Activated CD8-positive, alpha-beta T cell treated with anti-CD3 and anti-CD28 coated beads, Interleukin-2, amount 10 ng/mL, durations not matched to agents 7 days and 5 days (primary cell): ENCODE measurements at regions of chr4 and their contacts with region 1.

Region 1: DNA sequence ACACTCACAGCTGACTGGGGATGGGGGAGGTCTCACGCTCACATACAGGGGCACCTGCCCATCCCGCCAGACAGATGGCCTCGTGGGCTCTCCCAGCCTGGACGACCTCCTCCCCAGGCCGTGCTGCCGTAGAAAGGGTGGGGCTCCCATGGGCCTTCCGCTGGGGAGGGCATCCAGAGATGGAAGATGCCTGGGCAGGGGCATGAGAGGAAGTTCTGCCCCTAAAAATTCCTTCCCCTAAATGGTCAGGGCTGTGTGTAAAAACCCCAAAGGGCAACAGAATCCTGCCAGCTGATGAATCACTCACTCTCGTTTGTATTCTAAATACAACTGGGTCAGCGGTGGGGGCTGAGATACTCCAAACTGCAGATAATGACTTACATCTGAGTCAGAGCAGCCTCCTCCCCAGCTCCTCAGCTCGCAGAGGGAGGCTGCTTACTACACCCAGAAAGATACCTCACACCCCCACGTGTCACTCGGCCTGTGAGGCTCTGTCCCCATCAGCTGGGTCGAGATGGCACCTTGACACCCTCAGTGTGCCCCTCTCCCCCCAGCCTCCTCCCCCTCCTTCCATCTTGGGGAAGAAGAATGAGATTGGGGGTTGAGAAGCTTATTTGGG is 10.1 kb downstream of the WDR1 start:
- DNase-seq: peak; percentile 66
- ATAC-seq: peak; percentile 60
- H3K4me3 Mint-ChIP-seq: peak overlapping the region; percentile 18
- H3K27ac Mint-ChIP-seq: peak overlapping the region; percentile 83
- H3K4me1 Mint-ChIP-seq: peaks cover 96% of the 10 kb centered on the region
- H3K27me3 Mint-ChIP-seq: no peaks in the 10 kb centered on the region

Region 2: DNA sequence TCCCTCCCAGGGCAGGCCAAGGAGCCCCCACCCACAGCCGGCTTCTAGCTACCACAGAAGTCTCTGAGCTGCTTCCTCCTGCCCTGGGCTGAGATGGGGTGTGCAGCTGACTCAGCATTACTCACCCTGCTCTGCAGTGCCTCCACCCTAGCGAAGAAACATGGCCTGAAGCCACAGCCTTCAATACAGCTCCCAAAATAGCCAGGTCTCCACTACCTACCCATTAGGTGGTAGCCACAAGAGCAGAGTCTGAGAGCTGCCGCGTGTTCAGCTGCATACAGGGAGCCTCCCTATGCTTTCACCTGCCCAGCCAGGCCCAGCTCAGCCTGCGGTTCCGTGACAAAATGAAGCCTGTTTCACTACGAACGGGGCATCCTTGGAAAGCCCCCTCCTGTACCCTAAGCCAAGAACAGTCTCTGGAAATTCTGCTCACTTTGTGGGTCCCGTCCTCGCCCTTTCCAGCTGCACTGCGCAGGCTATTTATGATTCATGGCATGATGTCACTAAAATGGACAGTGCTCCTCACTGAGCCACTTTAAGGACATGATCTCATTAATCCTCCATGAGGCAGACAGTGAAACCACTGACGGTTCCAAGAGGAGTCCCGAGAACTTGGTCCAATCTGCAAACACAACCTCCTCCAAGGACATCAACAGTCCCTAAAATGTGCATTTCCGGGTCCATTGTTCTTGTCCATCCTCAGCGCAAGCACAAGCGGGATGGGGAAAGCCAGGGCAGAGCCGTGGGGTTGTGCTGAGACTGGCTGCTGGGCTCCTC is 10.1 kb before region 1 on chr4:
- CTCF ChIA-PET with region 1: interaction called, 10 read pairs
- POLR2A ChIA-PET with region 1: interaction called, 7 read pairs
- DNase-seq: peak; percentile 89
- ATAC-seq: peak; percentile 74
- H3K4me3 Mint-ChIP-seq: peak overlapping the region; percentile 58
- H3K27ac Mint-ChIP-seq: peak overlapping the region; percentile 91
- H3K4me1 Mint-ChIP-seq: peaks cover 97% of the 10 kb centered on the region
- H3K27me3 Mint-ChIP-seq: no peaks in the 10 kb centered on the region

Region 3: GRCh38 chr4:10496200-10496599 is 389.7 kb after region 1 on chr4:
- CTCF ChIA-PET with region 1: no interaction called
- POLR2A ChIA-PET with region 1: no interaction called
- DNase-seq: no peak
- ATAC-seq: no peak
- H3K4me3 Mint-ChIP-seq: no peak overlapping the region
- H3K27ac Mint-ChIP-seq: no peak overlapping the region
- H3K4me1 Mint-ChIP-seq: no peaks in the 10 kb centered on the region
- H3K27me3 Mint-ChIP-seq: peaks cover 3% of the 10 kb centered on the region